Head of caudate nucleus (tissue), 42 donors: ENCODE measurements at regions of chr22 and their contacts with region 1.

Region 1: DNA sequence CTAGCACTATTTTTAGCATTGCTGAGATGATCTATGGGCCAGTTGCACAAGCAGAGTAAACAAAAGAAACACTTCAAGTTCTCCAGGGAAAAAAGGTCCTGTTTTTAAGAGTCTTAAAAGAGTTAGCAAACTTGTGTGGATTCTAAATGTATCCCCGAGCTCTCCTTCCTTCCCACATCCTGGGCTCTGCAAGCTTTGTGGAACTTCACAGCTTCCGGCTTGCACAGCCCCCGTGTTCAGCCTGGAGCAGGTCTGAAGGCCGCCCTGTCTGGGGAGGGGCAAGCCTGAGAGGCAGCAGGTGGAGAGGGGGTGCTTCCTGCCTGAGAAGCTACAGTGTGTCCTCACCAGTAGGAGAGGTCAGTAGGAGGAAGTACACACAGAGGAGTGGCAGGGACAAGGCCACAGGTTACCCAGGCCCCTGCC is 35.1 kb upstream of the SUSD2 start:
- DNase-seq: peak in 13 of 42 donors; percentile 17 to 55 (median 37)

Region 2: DNA sequence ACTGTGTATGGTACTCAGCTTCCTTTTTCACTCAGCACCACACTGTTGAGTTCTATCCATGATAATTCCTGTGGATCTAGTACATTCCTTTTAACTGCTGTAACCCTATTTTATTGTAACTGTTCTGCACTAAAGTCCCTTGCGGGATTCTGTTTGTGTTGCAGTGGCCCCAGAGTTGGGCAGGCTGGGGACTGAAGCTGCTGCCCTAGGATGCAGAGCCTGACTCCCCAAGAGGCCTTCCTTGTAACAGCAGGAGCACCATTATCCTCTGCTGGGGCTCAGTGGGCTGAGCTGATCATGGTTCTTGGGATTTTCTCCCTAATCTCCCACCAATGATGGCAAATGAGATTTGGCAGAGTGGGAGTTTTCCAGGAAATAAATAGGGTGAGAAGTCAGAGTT is 57.4 kb before region 1 on chr22:
- intact Hi-C with region 1: loop called (anchors 10 kb)
- DNase-seq: no peak